Ovary (tissue), 10 donors: ENCODE measurements at regions of chr13 and their contacts with region 1.

Region 1: GRCh38 chr13:53007872-53008271 is 20.7 kb upstream of the OLFM4 start:
- DNase-seq: no peak
- H3K4me3 ChIP-seq: no peak overlapping the region
- H3K27ac ChIP-seq: no peak overlapping the region
- H3K4me1 ChIP-seq: no peaks in the 10 kb centered on the region
- H3K27me3 ChIP-seq: no peaks in the 10 kb centered on the region
- CTCF ChIP-seq: no peak
- EP300 ChIP-seq: no peak
- POLR2A ChIP-seq: no peak

Region 2: GRCh38 chr13:53466576-53466975 is 458.7 kb after region 1 on chr13:
- intact Hi-C with region 1: loop called in 1 of 4 experiments (anchors 5 kb)
- DNase-seq: no peak
- H3K4me3 ChIP-seq: no peak overlapping the region
- H3K27ac ChIP-seq: no peak overlapping the region
- H3K4me1 ChIP-seq: no peaks in the 10 kb centered on the region
- H3K27me3 ChIP-seq: no peaks in the 10 kb centered on the region
- CTCF ChIP-seq: no peak
- EP300 ChIP-seq: no peak
- POLR2A ChIP-seq: no peak